ENCODE measurements at regions of chr9 and their contacts with region 1.

Region 1: DNA sequence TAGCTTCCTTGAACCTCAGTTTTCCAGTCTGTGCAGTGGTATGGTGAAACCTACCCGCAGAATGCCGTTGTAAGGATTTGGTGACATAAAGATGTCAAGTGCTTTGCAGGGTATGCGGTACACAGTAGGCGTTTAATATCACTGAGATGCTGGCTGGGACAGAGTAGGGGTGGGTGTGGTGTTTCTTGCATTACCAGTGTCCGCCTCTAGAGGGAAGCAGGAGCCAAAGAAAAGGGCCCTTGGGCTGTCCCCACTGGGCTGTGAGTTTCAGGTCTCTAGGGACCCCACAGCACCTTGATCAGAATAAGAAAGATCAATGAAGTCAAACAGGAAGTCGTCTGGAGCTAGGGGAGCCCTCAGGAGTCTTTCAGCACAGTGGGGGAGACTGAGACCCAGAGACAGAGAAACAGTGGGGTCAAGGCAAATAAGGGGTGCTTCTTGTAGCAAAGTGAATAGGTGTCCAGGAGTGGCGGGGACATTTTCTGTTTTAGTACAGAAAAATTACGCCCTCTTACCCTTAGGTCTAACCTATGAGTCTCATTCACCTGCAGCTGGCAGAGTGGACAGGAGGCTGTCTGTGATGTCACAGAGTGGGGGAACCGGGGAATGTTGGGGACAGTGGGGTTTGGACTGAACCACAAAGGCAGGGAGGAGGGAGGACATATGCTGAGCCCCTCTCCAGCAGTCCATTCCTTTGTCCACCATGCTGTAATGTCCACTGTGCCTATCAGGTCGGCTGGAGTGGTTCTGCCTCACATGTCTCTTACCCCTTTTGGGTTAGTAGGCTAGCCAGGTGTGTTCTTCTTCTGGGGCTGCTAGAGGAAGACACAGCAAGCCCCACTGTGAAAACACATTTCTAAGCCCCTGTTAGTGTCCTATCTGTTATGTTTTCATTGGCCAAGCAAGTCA is 4.7 kb upstream of the TEX53 start:
- DNase-seq: peak; percentile 29
- H3K4me3 ChIP-seq: no peak overlapping the region
- H3K27ac ChIP-seq: no peak overlapping the region
- H3K4me1 ChIP-seq: peaks cover 13% of the 10 kb centered on the region
- H3K27me3 ChIP-seq: no peaks in the 10 kb centered on the region
- CTCF ChIP-seq: peak; percentile 79 to 91

Region 2: GRCh38 chr9:114606597-114607207 is 55.6 kb before region 1 on chr9:
- CTCF ChIA-PET with region 1: no interaction called
- dilution Hi-C with region 1: loop called (anchors 5 kb)
- in situ Hi-C with region 1: no loop called
- intact Hi-C with region 1: no loop called
- DNase-seq: peak; percentile 55
- H3K4me3 ChIP-seq: no peak overlapping the region
- H3K27ac ChIP-seq: no peak overlapping the region
- H3K4me1 ChIP-seq: peaks cover 20% of the 10 kb centered on the region
- H3K27me3 ChIP-seq: no peaks in the 10 kb centered on the region
- CTCF ChIP-seq: no peak

Region 3: DNA sequence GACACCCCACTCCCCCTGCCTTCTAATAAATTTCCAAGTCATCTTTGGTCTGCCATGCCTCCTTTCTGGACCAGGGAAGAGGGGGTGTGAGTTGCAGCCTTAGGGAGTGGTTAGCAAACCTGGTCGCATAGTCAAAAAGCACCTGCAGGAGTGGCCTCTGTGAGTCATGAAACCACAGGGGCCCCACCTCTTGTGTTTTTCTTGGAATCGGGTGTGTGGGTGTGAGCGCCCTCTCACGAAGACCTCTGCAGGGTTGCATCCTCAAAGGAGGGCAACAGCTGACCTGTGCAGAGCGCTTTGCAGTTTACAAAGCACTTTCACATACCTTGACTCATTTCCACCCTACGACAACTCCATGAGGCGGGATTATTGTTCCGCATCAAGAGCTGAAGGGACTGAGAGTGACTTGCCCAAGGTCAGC is 56.5 kb after region 1 on chr9:
- CTCF ChIA-PET with region 1: no interaction called
- dilution Hi-C with region 1: loop called (anchors 5 kb)
- in situ Hi-C with region 1: no loop called
- intact Hi-C with region 1: no loop called
- DNase-seq: peak; percentile 97
- H3K4me3 ChIP-seq: no peak overlapping the region
- H3K27ac ChIP-seq: peak overlapping the region; percentile 53
- H3K4me1 ChIP-seq: peaks cover 46% of the 10 kb centered on the region
- H3K27me3 ChIP-seq: no peaks in the 10 kb centered on the region
- CTCF ChIP-seq: peak in 1 of 2 donors; percentile 38

Region 4: GRCh38 chr9:114738581-114739316 is 76.4 kb after region 1 on chr9:
- CTCF ChIA-PET with region 1: no interaction called
- dilution Hi-C with region 1: no loop called
- in situ Hi-C with region 1: no loop called
- intact Hi-C with region 1: loop called (anchors 1 kb)
- DNase-seq: peak; percentile 78
- H3K4me3 ChIP-seq: no peak overlapping the region
- H3K27ac ChIP-seq: no peak overlapping the region
- H3K4me1 ChIP-seq: peaks cover 5% of the 10 kb centered on the region
- H3K27me3 ChIP-seq: no peaks in the 10 kb centered on the region
- CTCF ChIP-seq: peak; percentile 71 to 81

Region 5: DNA sequence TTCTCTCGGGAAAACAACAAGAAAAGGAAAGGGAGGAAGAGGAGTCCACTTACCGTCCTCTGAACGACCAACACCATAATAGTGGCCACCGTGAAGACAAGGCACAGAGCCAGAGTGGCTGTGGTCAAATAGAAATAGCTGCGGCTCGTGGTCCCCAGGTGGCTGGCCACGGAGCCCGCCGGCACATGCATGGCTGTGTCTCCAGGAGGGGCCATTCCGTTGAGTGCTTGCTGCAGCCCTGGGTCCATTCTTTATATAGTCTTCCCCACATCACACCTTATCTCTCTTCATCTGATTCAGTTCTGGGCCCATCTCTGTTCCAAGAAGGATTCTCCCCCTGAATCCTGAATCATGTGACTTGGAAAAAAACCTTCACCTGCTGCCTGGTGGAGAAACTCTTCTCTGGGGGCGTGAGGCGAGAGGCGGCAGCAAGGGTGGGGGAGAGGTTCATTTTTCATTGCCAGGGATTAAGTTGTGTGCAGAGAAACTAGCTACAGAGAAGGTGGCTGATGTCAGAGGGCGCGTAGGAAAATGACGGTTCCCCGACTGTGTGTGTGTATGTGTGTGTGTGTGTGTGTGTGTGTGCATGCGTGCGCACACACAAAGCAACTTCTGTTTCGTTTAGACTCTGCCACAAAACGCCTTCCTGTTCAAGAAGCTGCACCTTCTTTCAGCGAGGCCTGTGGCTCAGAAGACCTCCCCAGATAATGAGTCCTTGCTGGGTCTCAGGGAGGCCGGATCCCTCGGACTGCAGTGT is 267.9 kb after region 1 on chr9 and contains the start of gene TNFSF8:
- CTCF ChIA-PET with region 1: no interaction called
- dilution Hi-C with region 1: no loop called
- in situ Hi-C with region 1: no loop called
- intact Hi-C with region 1: no loop called
- DNase-seq: no peak
- H3K4me3 ChIP-seq: no peak within 1 kb of the TSS
- H3K27ac ChIP-seq: no peak within 1 kb of the TSS
- H3K4me1 ChIP-seq: no peaks in the 10 kb centered on the region
- H3K27me3 ChIP-seq: peaks cover 2% of the 10 kb centered on the region
- CTCF ChIP-seq: no peak
- total RNA-seq, gene TNFSF8: not detected

Region 6: DNA sequence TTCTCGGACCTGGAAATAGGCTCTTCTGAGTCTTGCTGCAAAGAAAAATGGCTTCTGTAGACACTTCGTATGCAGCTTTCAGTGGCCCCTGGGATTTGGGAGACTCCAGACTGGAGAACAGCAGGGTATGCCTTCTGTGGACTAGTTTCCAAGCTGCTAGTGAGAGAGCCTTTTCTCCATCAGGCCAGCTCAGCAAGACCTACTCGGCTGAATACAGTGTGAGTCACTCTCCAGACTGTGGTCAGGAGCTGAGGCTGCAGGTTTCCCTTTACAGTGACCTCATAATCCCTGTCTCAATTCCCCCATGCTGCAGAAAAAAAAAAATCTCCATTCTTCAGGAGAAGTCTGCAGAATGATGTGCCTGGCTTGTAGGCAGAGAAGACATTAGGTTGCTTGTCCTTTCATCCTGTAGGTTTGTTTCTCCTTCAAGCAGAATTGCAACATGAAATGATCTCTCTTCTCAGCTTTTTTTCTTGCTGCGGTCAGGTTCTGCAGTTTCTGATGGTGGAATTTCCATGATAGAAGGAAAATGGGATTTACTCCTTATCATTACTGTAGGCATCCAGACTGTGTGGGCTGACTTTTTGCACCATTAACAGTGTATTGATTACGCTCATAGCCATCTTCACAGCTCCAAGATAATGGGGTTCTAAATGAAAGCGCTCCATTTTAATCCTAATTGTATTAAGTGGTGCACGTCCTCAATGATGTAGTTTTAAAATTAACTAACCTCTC is 346.4 kb after region 1 on chr9:
- CTCF ChIA-PET with region 1: no interaction called
- dilution Hi-C with region 1: loop called (anchors 5 kb)
- in situ Hi-C with region 1: no loop called
- intact Hi-C with region 1: no loop called
- DNase-seq: peak; percentile 85
- H3K4me3 ChIP-seq: no peak overlapping the region
- H3K27ac ChIP-seq: no peak overlapping the region
- H3K4me1 ChIP-seq: peaks cover 9% of the 10 kb centered on the region
- H3K27me3 ChIP-seq: no peaks in the 10 kb centered on the region
- CTCF ChIP-seq: no peak

Region 7: DNA sequence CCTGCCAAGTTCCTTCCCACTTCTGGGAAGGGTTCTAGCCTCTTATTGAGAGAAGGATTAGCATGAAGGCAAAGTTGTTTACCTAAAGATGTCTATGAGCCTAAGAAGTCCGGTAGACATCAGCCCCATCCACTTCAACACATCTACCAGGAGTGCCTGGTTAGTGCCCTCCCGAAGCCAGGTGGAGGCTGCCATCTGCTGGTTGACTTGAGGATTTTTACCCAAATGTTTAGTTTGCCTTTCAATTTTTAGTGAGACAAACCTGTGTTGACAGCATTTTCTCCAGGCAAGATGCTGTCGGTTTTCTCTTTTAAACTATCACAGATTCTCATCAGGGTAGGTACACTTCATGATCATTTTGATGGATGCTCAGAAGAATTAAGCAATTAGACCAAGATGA is 351.7 kb after region 1 on chr9:
- CTCF ChIA-PET with region 1: no interaction called
- dilution Hi-C with region 1: loop called (anchors 5 kb)
- in situ Hi-C with region 1: no loop called
- intact Hi-C with region 1: loop called (anchors 1 kb)
- DNase-seq: peak; percentile 57
- H3K4me3 ChIP-seq: no peak overlapping the region
- H3K27ac ChIP-seq: no peak overlapping the region
- H3K4me1 ChIP-seq: peaks cover under 1% of the 10 kb centered on the region
- H3K27me3 ChIP-seq: no peaks in the 10 kb centered on the region
- CTCF ChIP-seq: peak; percentile 74 to 83

Region 8: DNA sequence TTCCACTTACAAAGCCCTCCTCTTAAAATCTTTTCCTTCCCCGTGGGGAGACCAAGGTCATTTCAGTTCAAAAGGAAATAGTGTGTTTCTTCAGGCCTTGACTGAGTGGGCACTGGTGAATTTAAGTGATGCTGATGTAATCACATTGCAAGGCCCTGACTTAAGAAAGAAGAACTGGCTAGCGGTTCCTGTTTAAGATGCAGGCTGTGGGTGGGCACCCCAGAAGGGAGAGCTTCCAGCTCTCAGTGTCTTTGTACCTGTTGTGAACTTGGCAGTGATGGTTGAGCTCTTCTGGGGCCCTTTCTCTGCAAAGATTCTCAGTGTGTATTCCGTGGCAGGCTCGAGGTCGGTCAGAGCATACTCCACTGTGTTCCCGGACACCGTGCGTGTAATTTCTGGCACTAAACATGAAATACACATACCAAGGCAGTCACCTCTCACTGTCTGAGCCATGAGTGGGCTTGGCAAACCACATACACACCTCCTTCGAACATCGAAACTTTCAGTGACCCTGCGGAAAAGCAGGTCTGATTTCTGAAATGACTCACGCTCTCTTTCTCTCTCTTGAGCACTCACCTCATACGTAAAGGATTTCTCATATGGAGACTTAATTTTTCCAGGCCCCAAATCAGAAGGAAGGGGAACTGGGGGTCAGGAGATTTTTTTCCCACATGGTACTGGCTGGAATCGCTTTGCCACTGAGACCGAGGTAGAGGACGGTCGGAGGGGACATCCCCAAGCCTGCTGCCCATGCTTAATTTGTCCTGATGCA is 373.7 kb after region 1 on chr9:
- CTCF ChIA-PET with region 1: no interaction called
- dilution Hi-C with region 1: no loop called
- in situ Hi-C with region 1: no loop called
- intact Hi-C with region 1: no loop called
- DNase-seq: peak; percentile 99
- H3K4me3 ChIP-seq: no peak overlapping the region
- H3K27ac ChIP-seq: peak overlapping the region; percentile 99
- H3K4me1 ChIP-seq: peaks cover 34% of the 10 kb centered on the region
- H3K27me3 ChIP-seq: no peaks in the 10 kb centered on the region
- CTCF ChIP-seq: no peak

Measured in mammary epithelial cell (primary cell).